ENCODE measurements at regions of chr3 and their contacts with region 1.

Region 1: DNA sequence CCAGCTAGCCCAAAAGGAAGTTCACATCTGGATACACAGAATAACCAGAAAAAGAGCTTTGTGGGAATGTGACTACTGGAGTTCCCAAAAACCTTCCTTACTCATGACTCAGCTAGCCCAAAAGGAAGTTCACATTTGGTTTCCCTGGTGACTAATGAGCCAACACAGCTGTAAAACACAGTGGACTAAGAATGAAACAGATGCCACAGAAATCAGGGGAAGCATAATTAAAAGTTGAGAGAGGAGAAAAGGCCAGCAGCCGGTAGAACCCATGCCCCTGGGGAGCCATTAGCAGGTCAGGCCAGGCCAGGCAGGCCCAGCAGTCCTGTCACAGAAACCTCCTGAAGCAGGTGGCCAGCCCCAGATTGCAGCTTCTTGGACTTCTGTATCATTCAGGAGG is 130.3 kb downstream of the GHSR start:
- DNase-seq: peak; percentile 49
- H3K4me3 ChIP-seq: no peak overlapping the region
- H3K27ac ChIP-seq: peak overlapping the region; percentile 73
- H3K4me1 ChIP-seq: peaks cover 12% of the 10 kb centered on the region
- H3K27me3 ChIP-seq: no peaks in the 10 kb centered on the region
- CTCF ChIP-seq: no peak

Region 2: DNA sequence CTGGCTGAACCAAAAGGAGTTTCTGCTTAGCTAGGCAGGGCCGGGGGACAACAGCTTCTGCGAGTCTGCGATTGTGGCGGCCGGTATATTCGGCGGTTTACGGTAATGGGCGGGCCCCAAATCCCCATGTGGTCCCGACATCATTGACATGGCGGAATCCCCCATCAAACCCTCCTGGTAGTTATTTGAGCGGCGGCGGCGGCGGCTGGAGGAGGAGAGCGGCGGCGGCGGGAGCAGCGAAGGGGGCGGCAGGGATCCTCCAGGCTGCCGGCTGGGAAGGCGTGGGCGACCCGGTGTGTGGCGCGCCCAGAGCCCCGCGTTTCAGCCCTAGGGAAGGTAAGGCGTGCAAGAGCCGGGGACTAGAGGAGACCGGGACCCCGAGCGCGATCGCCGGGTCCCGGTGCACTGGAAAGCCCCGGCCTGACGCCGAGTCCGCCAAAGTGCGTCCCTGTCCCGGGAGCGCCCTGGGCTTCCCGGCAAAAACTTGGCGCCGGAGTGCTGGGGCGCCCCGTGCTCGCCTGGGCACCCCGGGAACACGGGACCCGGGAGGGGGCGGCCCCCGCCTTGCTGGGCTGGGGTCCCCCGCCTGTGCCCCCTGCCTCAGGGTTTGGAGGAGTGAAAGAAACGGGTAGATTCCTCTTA is 278.4 kb before region 1 on chr3 and contains the start of gene FNDC3B:
- intact Hi-C with region 1: loop called (anchors 10 kb)
- DNase-seq: peak; percentile 97
- H3K4me3 ChIP-seq: peak within 1 kb of the TSS; percentile 87
- H3K27ac ChIP-seq: peak within 1 kb of the TSS; percentile 99
- H3K4me1 ChIP-seq: peaks cover 7% of the 10 kb centered on the region
- H3K27me3 ChIP-seq: no peaks in the 10 kb centered on the region
- CTCF ChIP-seq: no peak
- total RNA-seq, gene FNDC3B: 66.7 to 142 TPM

Region 3: DNA sequence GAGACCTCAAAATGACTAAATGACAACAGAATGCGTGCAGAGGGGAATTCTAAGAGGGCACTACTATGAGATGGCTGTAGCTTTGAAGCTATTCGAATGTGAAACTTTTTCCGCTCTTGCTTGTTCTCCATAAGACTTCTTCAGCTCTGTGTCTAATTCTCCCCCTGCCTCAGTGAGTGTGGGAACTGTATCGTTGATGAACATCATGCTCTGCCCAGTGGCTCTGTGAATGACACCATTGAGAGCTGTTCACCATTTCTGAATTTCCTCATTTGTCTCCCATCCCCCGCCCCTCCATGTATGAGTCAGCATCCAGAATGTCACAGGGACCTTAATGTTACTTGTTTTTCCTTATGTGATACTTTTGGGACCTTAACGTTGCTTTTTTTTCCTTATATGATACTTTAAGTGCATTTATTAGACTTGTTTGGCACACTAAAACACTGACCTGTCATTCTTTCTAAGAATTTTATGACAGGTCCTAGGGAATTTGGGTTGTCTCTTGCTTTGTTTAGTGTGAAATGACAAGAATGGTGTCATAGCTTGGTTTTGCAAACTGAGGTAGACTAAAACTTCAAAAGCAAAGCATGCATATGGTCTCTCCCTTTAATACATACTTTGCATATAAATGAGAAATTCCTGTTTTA is 179.1 kb before region 1 on chr3:
- intact Hi-C with region 1: no loop called
- DNase-seq: peak; percentile 81
- H3K4me3 ChIP-seq: no peak overlapping the region
- H3K27ac ChIP-seq: peak overlapping the region; percentile 39
- H3K4me1 ChIP-seq: peaks cover 17% of the 10 kb centered on the region
- H3K27me3 ChIP-seq: no peaks in the 10 kb centered on the region
- CTCF ChIP-seq: no peak

Region 4: GRCh38 chr3:172746476-172746875 is 428.5 kb after region 1 on chr3:
- intact Hi-C with region 1: no loop called
- DNase-seq: no peak
- H3K4me3 ChIP-seq: no peak overlapping the region
- H3K27ac ChIP-seq: no peak overlapping the region
- H3K4me1 ChIP-seq: peaks cover 4% of the 10 kb centered on the region
- H3K27me3 ChIP-seq: no peaks in the 10 kb centered on the region
- CTCF ChIP-seq: no peak

Measured in colonic mucosa (tissue), 4 donors.